ENCODE measurements at regions of chr5 and their contacts with region 1.

Region 1: DNA sequence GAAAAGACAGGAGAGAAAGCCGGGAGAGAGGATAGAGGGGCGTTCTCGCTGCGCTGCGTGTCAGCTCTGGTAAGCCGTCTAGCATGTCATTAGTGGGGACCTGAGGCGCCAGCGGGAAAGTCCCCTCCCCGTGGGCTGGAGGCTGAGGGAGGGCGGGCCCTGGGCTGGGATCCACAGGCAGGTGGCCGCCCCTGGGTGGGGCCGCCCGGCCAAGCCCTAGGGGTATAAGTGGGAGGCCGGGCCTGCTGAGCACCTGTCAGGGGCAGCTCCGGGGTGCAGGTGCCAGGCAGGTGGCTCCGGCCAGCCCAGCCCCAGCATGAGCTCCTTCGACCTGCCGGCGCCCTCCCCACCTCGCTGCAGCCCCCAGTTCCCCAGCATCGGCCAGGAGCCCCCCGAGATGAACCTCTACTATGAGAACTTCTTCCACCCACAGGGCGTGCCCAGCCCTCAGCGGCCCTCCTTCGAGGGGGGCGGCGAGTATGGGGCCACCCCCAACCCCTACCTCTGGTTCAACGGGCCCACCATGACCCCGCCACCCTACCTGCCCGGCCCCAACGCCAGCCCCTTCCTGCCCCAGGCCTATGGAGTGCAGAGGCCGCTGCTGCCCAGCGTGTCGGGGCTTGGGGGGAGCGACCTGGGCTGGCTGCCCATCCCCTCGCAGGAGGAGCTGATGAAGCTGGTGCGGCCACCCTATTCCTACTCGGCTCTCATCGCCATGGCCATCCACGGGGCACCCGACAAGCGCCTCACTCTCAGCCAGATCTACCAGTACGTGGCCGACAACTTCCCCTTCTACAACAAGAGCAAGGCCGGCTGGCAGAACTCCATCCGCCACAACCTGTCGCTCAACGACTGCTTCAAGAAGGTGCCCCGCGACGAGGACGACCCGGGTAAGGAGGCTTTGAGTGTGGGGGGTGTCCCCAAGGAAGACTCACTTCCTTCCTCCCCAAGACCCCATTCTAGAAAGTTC is at the start of gene FOXI1:
- DNase-seq: no peak
- ATAC-seq: no peak
- H3K4me3 ChIP-seq: no peak within 1 kb of the TSS
- H3K27ac ChIP-seq: no peak within 1 kb of the TSS
- H3K4me1 ChIP-seq: no peaks in the 10 kb centered on the region
- H3K27me3 ChIP-seq: no peaks in the 10 kb centered on the region
- CTCF ChIP-seq: no peak
- POLR2A ChIP-seq: no peak
- total RNA-seq, gene FOXI1: not detected

Region 2: GRCh38 chr5:169808118-169808581 is 297.8 kb before region 1 on chr5:
- intact Hi-C with region 1: no loop called
- DNase-seq: no peak
- ATAC-seq: no peak
- H3K4me3 ChIP-seq: no peak overlapping the region
- H3K27ac ChIP-seq: no peak overlapping the region
- H3K4me1 ChIP-seq: no peaks in the 10 kb centered on the region
- H3K27me3 ChIP-seq: peaks cover 0 to 3% of the 10 kb centered on the region in 2 donors
- CTCF ChIP-seq: no peak
- POLR2A ChIP-seq: no peak

Region 3: DNA sequence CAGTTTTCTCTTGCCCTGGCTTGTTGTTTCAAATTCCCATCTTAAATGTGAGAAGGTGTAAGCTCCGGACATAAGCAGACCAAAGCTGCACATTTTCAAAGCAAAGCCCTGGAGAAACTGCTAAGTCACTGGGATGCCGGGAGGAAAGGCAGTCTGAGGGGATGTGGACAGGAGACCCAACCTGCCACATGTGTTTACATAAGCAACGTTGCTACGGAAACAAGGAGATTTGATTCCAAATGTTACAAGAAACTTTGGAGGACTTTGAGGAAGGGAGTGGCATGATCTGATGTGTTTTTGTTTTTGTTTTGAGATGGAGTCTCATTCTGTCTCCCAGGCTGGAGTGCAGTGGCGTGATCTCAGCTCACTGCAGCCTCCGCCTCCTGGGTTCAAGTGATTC is 99.9 kb before region 1 on chr5:
- intact Hi-C with region 1: no loop called
- DNase-seq: no peak
- ATAC-seq: no peak
- H3K4me3 ChIP-seq: no peak overlapping the region
- H3K27ac ChIP-seq: no peak overlapping the region
- H3K4me1 ChIP-seq: no peaks in the 10 kb centered on the region
- H3K27me3 ChIP-seq: no peaks in the 10 kb centered on the region
- CTCF ChIP-seq: no peak
- POLR2A ChIP-seq: no peak

Region 4: DNA sequence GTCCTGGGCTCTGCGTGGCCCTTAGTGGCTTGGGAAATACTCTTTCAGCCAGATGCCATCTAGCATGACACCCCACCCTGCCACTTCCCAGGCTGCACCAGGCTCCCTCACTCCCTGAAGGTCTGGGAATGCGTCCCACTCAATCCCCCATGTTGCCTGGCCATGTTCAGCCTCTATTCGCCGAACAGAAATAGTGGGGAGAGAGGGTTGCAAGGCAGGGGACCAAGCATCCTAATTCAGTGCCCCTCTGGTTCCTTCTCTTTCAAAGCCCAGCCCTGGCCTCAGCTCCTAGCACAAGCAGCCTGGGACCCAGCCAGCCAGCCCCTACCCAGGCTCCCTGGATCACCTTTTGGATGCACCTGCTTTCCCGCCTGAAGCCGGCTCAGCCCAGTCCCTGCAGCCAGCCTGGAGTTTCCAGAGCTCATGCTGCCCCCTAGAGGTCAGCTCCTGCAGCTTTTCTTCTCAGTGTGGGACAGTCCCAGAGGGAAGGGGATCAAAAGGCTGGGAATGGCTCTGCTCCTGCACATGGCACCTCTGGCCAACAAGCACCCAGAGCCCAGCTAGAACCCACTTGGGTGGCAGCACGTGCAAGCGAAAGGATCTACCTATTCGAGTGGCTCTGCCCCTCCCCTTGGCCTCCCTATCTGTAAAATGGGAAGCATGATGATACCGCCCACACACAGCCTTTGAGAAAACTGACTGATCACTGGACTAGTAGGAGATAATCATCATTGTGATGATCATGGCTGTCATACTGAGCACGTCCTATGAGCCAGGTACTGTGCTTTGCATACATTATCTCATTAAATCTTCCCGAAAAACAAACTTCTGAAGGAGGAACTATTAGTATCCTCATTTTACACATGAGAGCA is 78.1 kb after region 1 on chr5:
- intact Hi-C with region 1: loop called (anchors 5 kb)
- DNase-seq: peak; percentile 62 to 69 (median 66)
- ATAC-seq: peak; percentile 75
- H3K4me3 ChIP-seq: no peak overlapping the region
- H3K27ac ChIP-seq: no peak overlapping the region
- H3K4me1 ChIP-seq: no peaks in the 10 kb centered on the region
- H3K27me3 ChIP-seq: no peaks in the 10 kb centered on the region
- CTCF ChIP-seq: peak; percentile 56 to 67 (median 59)
- POLR2A ChIP-seq: no peak

Measured in body of pancreas (tissue), 4 donors.